Ascending aorta (tissue), 2 donors: ENCODE measurements at regions of chr2 and their contacts with region 1.

Region 1: DNA sequence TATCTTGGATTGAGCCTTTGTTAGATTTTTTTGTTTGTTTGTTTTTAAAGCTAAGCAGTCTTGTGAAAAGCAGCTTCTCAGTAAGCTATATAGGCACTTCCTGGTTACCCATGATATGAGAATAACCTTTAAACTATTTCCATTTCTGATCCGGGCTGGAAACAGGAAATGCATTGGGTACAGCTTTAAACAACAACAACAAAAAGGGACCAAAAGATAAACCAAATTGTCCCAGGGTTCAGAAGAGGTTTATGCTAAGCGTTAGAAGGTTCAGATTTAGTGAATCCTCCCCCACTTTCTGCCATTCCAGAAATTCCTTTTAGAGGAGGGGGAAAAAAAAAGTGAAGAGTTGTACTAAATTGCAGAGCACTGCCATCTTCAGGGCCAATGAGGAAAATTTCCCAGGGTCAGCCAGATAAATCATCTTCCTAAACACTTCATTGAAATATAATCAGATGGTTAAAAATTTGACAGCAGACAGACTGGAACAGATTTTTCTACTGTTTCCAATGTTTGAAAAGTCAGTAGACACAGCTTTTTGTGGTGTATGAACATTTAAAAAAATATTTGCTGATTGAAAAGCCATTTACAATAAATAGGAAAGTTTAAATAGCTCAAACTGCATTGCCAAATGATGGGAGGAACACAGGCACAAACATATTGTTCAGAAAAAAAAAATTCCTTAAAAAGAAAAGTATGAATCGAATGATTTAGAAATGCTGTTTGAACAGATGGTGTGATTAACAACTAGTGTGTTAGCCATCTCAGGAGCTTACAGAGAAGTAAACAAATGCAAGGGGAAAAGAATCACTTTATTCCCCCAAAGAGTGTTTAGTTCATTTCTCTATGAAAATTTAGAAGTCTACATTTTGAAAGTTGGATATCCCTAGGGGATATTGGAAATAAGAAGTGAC is 189.9 kb upstream of the TANK start:
- DNase-seq: no peak
- H3K4me3 ChIP-seq: peak overlapping the region; percentile 39 to 52
- H3K27ac ChIP-seq: peak overlapping the region; percentile 46 to 51
- H3K4me1 ChIP-seq: no peaks in the 10 kb centered on the region
- H3K27me3 ChIP-seq: no peaks in the 10 kb centered on the region
- CTCF ChIP-seq: peak; percentile 65 to 85 (median 72)

Region 2: DNA sequence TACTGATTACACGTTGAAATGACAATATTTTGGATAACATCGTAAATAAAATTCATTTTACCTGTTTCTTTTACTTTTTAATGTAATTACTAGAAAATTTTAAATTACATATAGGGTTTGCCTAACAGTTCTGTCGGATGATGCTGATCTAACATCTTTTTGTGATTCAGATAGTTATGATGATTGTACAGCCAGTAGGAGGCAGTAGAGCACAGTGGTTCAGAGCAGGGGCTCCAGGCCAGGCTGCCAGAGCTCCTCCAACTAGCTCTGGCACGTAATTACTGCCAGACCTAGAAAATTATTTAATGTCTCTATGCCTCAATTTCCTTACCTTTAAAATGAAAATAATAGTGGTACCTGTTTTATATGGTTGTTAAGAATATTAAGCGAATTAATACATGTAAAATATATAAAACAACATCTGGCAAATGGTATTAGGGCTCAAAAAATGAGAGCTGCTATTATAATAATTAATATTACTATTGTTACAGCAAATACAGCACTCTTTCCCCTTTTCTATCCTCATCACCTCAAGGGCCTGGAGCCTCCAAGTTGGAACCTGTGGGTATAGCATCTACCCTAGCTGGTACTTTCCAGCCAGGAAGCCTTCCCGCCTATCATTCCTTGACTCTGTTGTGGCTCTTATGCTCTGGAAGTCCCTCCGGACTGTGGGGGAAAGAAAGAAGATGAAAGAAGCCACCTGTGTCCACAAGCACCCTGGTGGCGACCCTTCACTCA is 860.2 kb before region 1 on chr2:
- intact Hi-C with region 1: loop called (anchors 2 kb)
- DNase-seq: peak in 1 of 2 donors; percentile 82
- H3K4me3 ChIP-seq: no peak overlapping the region
- H3K27ac ChIP-seq: no peak overlapping the region
- H3K4me1 ChIP-seq: no peaks in the 10 kb centered on the region
- H3K27me3 ChIP-seq: no peaks in the 10 kb centered on the region
- CTCF ChIP-seq: peak; percentile 76 to 86 (median 81)

Region 3: GRCh38 chr2:160252278-160252887 is 717.9 kb before region 1 on chr2:
- intact Hi-C with region 1: loop called (anchors 10 kb)
- DNase-seq: no peak
- H3K4me3 ChIP-seq: no peak overlapping the region
- H3K27ac ChIP-seq: peak overlapping the region in 1 of 2 donors; percentile 42
- H3K4me1 ChIP-seq: no peaks in the 10 kb centered on the region
- H3K27me3 ChIP-seq: no peaks in the 10 kb centered on the region
- CTCF ChIP-seq: peak; percentile 73 to 85 (median 78)

Region 4: DNA sequence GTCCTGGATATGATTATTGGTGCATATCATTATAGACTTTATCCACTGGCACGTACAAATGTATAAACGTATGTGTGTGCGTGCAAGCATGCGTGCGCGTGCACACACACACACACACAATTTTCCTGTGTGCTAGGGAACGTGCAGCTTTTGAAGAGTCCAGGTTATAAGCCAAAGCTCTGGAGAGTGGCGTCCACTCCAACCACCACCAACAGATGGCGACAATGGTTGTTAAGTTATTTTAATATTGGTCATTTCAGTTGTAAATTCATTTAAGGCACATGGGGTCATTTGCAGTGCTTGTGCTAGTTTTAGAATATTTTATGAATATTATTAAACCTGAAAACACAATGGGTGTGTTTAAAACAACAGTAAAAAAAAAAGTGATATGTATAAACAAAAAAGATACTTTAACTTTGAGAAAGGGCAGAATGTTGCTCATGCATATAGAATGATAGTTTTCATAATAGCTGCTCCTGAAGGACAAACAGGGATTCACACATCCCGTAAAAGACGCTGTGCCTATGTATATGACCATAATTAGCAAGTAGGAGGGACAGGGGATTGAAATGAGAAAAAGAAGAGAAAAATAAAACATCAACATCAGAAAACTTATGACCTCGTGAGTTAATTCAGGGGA is 646.0 kb before region 1 on chr2:
- intact Hi-C with region 1: loop called (anchors 1 kb)
- DNase-seq: peak in 1 of 2 donors; percentile 78
- H3K4me3 ChIP-seq: no peak overlapping the region
- H3K27ac ChIP-seq: no peak overlapping the region
- H3K4me1 ChIP-seq: peaks cover 1 to 23% of the 10 kb centered on the region in 2 donors
- H3K27me3 ChIP-seq: no peaks in the 10 kb centered on the region
- CTCF ChIP-seq: peak; percentile 27 to 81 (median 66)

Region 5: GRCh38 chr2:160429248-160430000 is 540.9 kb before region 1 on chr2:
- intact Hi-C with region 1: loop called (anchors 5 kb)
- DNase-seq: no peak
- H3K4me3 ChIP-seq: no peak overlapping the region
- H3K27ac ChIP-seq: peak overlapping the region; percentile 77 to 89
- H3K4me1 ChIP-seq: peaks cover 5 to 28% of the 10 kb centered on the region in 2 donors
- H3K27me3 ChIP-seq: no peaks in the 10 kb centered on the region
- CTCF ChIP-seq: peak; percentile 45 to 57 (median 55)

Region 6: GRCh38 chr2:160666154-160667060 is 303.9 kb before region 1 on chr2:
- intact Hi-C with region 1: loop called (anchors 5 kb)
- DNase-seq: no peak
- H3K4me3 ChIP-seq: peak overlapping the region in 1 of 2 donors; percentile 31
- H3K27ac ChIP-seq: peak overlapping the region; percentile 58 to 78
- H3K4me1 ChIP-seq: peaks cover 0 to 18% of the 10 kb centered on the region in 2 donors
- H3K27me3 ChIP-seq: no peaks in the 10 kb centered on the region
- CTCF ChIP-seq: no peak